ENCODE measurements at regions of chr2 and their contacts with region 1.

Region 1: GRCh38 chr2:233251306-233252116 is at the start of gene ATG16L1:
- DNase-seq: peak; percentile 96
- H3K4me3 ChIP-seq: peak within 1 kb of the TSS; percentile 72 to 99 (median 94)
- H3K27ac ChIP-seq: peak within 1 kb of the TSS; percentile 77
- H3K4me1 ChIP-seq: peaks cover 28% of the 10 kb centered on the region
- H3K27me3 ChIP-seq: no peaks in the 10 kb centered on the region
- CTCF ChIP-seq: peak; percentile 99
- POLR2A ChIP-seq: peak; percentile 89
- total RNA-seq, gene ATG16L1: 29.8 and 30.2 TPM in 2 replicates

Region 2: GRCh38 chr2:232697100-232697865 is 554.2 kb before region 1 on chr2 and contains the start of gene GIGYF2:
- CTCF ChIA-PET with region 1: no interaction called
- POLR2A ChIA-PET with region 1: no interaction called
- dilution Hi-C with region 1: no loop called
- intact Hi-C with region 1: loop called (anchors 1 kb)
- DNase-seq: peak; percentile 98
- H3K4me3 ChIP-seq: peak within 1 kb of the TSS; percentile 39 to 98 (median 80)
- H3K27ac ChIP-seq: peak within 1 kb of the TSS; percentile 68
- H3K4me1 ChIP-seq: peaks cover 19% of the 10 kb centered on the region
- H3K27me3 ChIP-seq: peaks cover 0 to 2% of the 10 kb centered on the region in 2 experiments
- CTCF ChIP-seq: no peak
- POLR2A ChIP-seq: peak; percentile 89
- total RNA-seq, gene GIGYF2: 54.2 and 56.4 TPM in 2 replicates

Region 3: DNA sequence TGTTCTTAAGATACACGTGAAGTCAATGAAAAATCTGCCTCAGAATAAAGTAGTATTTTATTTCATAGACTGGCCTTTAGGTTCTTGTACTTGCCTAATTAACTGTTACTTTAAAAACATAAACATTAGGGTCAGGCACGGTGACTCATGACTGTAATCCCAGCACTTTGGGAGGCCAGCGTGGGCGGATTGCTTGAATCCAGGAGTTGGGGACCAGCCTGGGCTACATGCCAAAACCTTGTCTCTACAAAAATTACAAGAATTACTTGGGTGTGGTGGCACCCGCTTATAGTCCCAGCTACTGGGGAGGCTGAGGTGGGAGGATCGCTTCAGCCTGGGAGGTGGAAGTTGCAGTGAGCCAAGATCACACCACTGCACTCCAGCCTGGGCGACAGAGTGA is 397.4 kb before region 1 on chr2:
- CTCF ChIA-PET with region 1: interaction called, 17 read pairs
- POLR2A ChIA-PET with region 1: no interaction called
- dilution Hi-C with region 1: no loop called
- intact Hi-C with region 1: loop called (anchors 1 kb)
- DNase-seq: peak; percentile 68
- H3K4me3 ChIP-seq: no peak overlapping the region
- H3K27ac ChIP-seq: no peak overlapping the region
- H3K4me1 ChIP-seq: peaks cover 8% of the 10 kb centered on the region
- H3K27me3 ChIP-seq: no peaks in the 10 kb centered on the region
- CTCF ChIP-seq: no peak
- POLR2A ChIP-seq: no peak

Region 4: GRCh38 chr2:232901736-232902578 is 349.6 kb before region 1 on chr2:
- CTCF ChIA-PET with region 1: no interaction called
- POLR2A ChIA-PET with region 1: no interaction called
- dilution Hi-C with region 1: no loop called
- intact Hi-C with region 1: loop called (anchors 5 kb)
- DNase-seq: peak; percentile 92
- H3K4me3 ChIP-seq: no peak overlapping the region
- H3K27ac ChIP-seq: peak overlapping the region; percentile 86
- H3K4me1 ChIP-seq: peaks cover 15% of the 10 kb centered on the region
- H3K27me3 ChIP-seq: no peaks in the 10 kb centered on the region
- CTCF ChIP-seq: no peak
- POLR2A ChIP-seq: no peak

Region 5: GRCh38 chr2:233026192-233026813 is 225.2 kb before region 1 on chr2:
- CTCF ChIA-PET with region 1: interaction called, 13 read pairs
- POLR2A ChIA-PET with region 1: no interaction called
- dilution Hi-C with region 1: no loop called
- intact Hi-C with region 1: loop called (anchors 1 kb)
- DNase-seq: no peak
- H3K4me3 ChIP-seq: no peak overlapping the region
- H3K27ac ChIP-seq: no peak overlapping the region
- H3K4me1 ChIP-seq: no peaks in the 10 kb centered on the region
- H3K27me3 ChIP-seq: no peaks in the 10 kb centered on the region
- CTCF ChIP-seq: no peak
- POLR2A ChIP-seq: no peak

Region 6: GRCh38 chr2:233061591-233062450 is 189.7 kb before region 1 on chr2:
- CTCF ChIA-PET with region 1: interaction called, 10 read pairs
- POLR2A ChIA-PET with region 1: no interaction called
- dilution Hi-C with region 1: no loop called
- intact Hi-C with region 1: loop called (anchors 2 kb)
- DNase-seq: peak; percentile 70
- H3K4me3 ChIP-seq: peak overlapping the region; percentile 21 to 65 (median 55)
- H3K27ac ChIP-seq: peak overlapping the region; percentile 29
- H3K4me1 ChIP-seq: peaks cover 32% of the 10 kb centered on the region
- H3K27me3 ChIP-seq: no peaks in the 10 kb centered on the region
- CTCF ChIP-seq: peak; percentile 33 to 56
- POLR2A ChIP-seq: peak; percentile 19

Region 7: DNA sequence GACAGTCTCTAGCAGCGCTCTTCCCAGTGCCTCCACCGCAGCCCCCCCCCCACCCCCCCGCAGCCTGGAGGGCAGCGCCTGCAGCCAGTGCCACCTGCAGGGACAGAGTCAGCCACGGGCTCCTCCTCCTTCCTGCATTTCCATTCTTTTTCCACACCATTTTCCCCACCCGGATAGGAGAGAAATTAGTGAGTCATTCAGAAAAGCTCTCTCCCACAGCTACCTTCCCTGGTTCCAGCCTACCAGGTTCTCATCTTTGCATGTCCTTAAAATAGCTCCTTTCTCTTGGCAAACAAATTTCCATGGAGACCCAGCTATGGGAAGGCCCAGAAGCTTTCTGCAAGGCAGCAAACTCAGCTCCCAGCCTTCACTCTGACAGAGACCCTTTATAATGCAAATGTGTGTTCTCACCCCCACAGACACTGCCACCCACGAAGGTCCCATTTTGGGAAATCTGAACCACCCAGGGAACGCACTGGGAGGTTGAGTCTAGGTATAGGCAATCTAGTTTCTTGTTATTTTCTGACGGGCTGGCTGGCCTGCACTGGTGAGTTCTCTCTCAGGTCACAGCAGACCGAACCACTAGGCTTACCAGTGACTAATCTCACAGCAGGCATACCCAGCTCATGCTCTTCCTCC is 41.9 kb before region 1 on chr2:
- CTCF ChIA-PET with region 1: interaction called, 5 read pairs
- POLR2A ChIA-PET with region 1: no interaction called
- dilution Hi-C with region 1: no loop called
- intact Hi-C with region 1: loop called (anchors 1 kb)
- DNase-seq: peak; percentile 73
- H3K4me3 ChIP-seq: no peak overlapping the region
- H3K27ac ChIP-seq: peak overlapping the region; percentile 40
- H3K4me1 ChIP-seq: peaks cover 38% of the 10 kb centered on the region
- H3K27me3 ChIP-seq: no peaks in the 10 kb centered on the region
- CTCF ChIP-seq: no peak
- POLR2A ChIP-seq: no peak

Region 8: GRCh38 chr2:233486778-233487552 is 235.5 kb after region 1 on chr2:
- CTCF ChIA-PET with region 1: no interaction called
- POLR2A ChIA-PET with region 1: no interaction called
- dilution Hi-C with region 1: no loop called
- intact Hi-C with region 1: no loop called
- DNase-seq: peak; percentile 90
- H3K4me3 ChIP-seq: no peak overlapping the region
- H3K27ac ChIP-seq: peak overlapping the region; percentile 91
- H3K4me1 ChIP-seq: peaks cover 28% of the 10 kb centered on the region
- H3K27me3 ChIP-seq: no peaks in the 10 kb centered on the region
- CTCF ChIP-seq: no peak
- POLR2A ChIP-seq: peak; percentile 20

Measured in endothelial cell of umbilical vein (primary cell).